ENCODE measurements at regions of chr1 and their contacts with region 1.

Region 1: DNA sequence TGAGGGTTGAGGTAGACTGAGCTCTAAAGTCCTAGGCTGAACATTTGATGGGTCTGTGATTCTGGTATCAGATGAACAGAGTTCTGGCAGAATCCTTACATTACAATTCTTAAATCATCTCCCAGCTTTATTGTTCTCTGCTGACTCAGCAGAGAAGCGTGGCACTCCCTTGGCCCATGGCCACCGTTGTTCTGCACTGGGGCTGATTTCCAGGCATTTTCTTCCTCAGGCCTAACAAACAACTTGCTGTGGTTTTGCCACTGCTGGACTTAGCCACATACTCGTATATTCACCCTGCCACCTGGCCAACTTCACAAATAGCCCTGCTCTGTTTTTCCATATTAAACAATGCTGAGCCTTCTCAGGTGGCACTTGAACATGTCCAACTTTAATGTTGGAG is 223.2 kb downstream of the TNR start:
- DNase-seq: no peak
- H3K4me3 Mint-ChIP-seq: no peak overlapping the region
- H3K27ac Mint-ChIP-seq: no peak overlapping the region
- H3K4me1 Mint-ChIP-seq: peaks cover 2% of the 10 kb centered on the region
- H3K27me3 Mint-ChIP-seq: peaks cover 8% of the 10 kb centered on the region

Region 2: GRCh38 chr1:175394739-175395138 is 125.4 kb before region 1 on chr1:
- intact Hi-C with region 1: loop called (anchors 10 kb)
- DNase-seq: no peak
- H3K4me3 Mint-ChIP-seq: no peak overlapping the region
- H3K27ac Mint-ChIP-seq: no peak overlapping the region
- H3K4me1 Mint-ChIP-seq: no peaks in the 10 kb centered on the region
- H3K27me3 Mint-ChIP-seq: peaks cover 6% of the 10 kb centered on the region

Region 3: DNA sequence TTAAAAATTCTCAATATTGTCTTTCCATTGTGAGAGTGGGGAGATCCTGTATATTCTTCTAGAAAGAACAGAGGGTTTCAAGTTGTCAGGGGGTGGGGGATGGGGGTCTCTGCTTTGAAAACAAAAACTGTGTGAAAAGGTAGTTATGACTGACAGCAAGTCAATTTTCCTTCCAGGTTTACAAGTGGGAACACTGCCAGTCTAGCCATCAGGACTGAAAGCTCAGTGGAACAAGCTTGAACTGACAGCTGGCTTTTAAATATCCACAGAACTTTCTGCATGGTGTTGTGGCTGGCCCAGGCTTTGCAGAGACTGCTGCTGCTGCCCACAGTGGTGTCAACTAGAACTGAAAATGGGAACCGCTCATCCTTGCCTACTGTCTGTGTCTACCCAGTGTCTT is 60.7 kb after region 1 on chr1:
- intact Hi-C with region 1: no loop called
- DNase-seq: no peak
- H3K4me3 Mint-ChIP-seq: no peak overlapping the region
- H3K27ac Mint-ChIP-seq: no peak overlapping the region
- H3K4me1 Mint-ChIP-seq: no peaks in the 10 kb centered on the region
- H3K27me3 Mint-ChIP-seq: peaks cover 2% of the 10 kb centered on the region

Measured in activated CD4-positive, alpha-beta T cell treated with anti-CD3 and anti-CD28 coated beads, Interleukin-2, amount 10 ng/mL, durations not matched to agents 24 days and 14 days (primary cell).